ENCODE measurements at regions of chr10 and their contacts with region 1.

Region 1: GRCh38 chr10:77846718-77847630 is 79.6 kb downstream of the DLG5 start:
- DNase-seq: peak; percentile 73
- ATAC-seq: peak; percentile 78 to 79

Region 2: GRCh38 chr10:77898647-77899477 is 51.9 kb after region 1 on chr10:
- intact Hi-C with region 1: no loop called
- DNase-seq: peak; percentile 33
- ATAC-seq: peak; percentile 50 to 75

Region 3: GRCh38 chr10:77926566-77927401 is 79.8 kb after region 1 on chr10 and contains the start of gene DLG5:
- intact Hi-C with region 1: loop called in 1 of 2 experiments (anchors 5 kb)
- DNase-seq: peak; percentile 75
- ATAC-seq: peak; percentile 88 to 93
- total RNA-seq, gene DLG5: 12.0 to 13.6 TPM

Region 4: GRCh38 chr10:77970869-77971803 is 124.2 kb after region 1 on chr10:
- intact Hi-C with region 1: loop called (anchors 5 to 10 kb)
- DNase-seq: peak; percentile 67
- ATAC-seq: peak; percentile 89 to 94

Region 5: DNA sequence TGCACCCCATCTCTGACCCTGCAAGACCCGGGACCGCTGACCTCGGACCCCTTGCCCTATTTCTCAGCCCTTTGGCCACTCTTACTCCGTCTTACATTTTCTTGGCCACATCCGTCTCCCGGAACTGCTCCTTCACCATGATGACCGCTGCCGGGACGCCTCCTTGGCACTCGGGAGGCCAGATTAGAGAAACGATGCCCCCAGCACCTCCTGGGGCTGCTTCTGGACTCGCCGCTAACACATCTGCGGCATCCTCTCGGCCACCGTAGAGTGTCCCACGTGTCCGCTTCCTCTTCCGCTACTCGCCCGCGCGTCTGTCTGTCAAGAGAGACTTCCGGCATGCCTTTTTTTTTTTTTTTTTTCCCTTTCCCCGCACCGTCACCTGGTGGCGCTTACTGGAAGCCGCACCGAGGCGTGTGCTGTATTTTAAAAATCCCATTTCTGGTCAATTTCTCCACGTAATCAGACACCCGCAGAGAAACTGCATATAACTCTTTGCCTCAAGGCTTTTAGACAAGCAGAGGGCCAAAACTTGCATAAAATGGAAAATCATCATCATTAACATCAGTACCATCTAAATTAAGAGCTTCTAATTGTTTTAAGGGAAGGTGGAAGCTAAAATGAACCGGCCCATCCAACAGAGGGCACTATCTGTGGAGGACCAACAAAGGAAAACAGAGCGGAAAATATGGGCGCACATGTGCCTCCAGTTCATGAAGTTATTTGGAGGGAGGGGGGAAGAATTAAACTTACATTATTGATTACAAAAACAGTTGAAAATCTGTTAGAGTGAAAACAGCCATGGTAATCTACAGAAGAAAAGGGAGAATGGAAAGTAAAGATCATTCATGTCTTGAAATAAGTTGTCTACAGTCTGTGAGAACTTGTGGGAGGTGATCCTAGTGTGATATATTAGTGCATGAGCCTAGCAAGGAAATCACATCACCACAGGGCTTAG is 182.6 kb after region 1 on chr10 and contains the start of gene POLR3A:
- intact Hi-C with region 1: loop called in 1 of 2 experiments (anchors 2 kb)
- DNase-seq: peak; percentile 98
- ATAC-seq: peak; percentile 77 to 79
- total RNA-seq, gene POLR3A: 9.7 to 10.2 TPM